Panc1 (cell line): ENCODE measurements at regions of chr7 and their contacts with region 1.

Region 1: GRCh38 chr7:151351027-151351426 is 9.4 kb downstream of the NUB1 start:
- DNase-seq: no peak
- ATAC-seq: peak; percentile 71
- H3K4me3 ChIP-seq: no peak overlapping the region
- H3K27ac ChIP-seq: no peak overlapping the region
- H3K4me1 ChIP-seq: peaks cover 9% of the 10 kb centered on the region; the same call in 1 of the 2 replicates
- H3K27me3 ChIP-seq: no peaks in the 10 kb centered on the region
- CTCF ChIP-seq: no peak; the same call in 1 of the 2 replicates

Region 2: GRCh38 chr7:151181011-151181431 is 170.0 kb before region 1 on chr7:
- CTCF ChIA-PET with region 1: no interaction called
- POLR2A ChIA-PET with region 1: no interaction called
- in situ Hi-C with region 1: no loop called
- intact Hi-C with region 1: no loop called
- DNase-seq: no peak
- ATAC-seq: no peak
- H3K4me3 ChIP-seq: no peak overlapping the region
- H3K27ac ChIP-seq: no peak overlapping the region
- H3K4me1 ChIP-seq: no peaks in the 10 kb centered on the region
- H3K27me3 ChIP-seq: peaks cover 4% of the 10 kb centered on the region; the same call in 1 of the 2 replicates
- CTCF ChIP-seq: no peak

Region 3: DNA sequence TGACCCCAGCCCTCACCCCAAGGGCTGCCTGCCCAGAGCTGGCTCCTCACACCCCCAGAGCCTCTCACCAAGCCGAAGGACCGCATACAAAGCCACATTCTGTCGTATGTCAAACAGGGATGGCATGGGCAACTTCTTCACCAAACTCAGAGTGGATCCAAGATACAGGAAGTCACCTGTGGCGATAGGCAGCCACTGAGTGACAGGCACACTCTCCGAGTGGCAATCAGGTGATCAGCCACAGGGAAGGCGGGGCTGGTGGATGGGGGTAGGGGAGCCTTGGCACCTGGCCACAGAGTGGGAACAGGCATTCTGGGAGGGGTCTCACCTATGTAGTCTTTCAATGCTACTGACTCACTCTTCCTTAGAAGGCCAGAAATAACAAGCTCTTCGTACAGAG is 156.8 kb before region 1 on chr7:
- CTCF ChIA-PET with region 1: no interaction called
- POLR2A ChIA-PET with region 1: interaction called, 10 read pairs
- in situ Hi-C with region 1: no loop called
- intact Hi-C with region 1: no loop called
- DNase-seq: no peak
- ATAC-seq: no peak
- H3K4me3 ChIP-seq: no peak overlapping the region
- H3K27ac ChIP-seq: no peak overlapping the region
- H3K4me1 ChIP-seq: no peaks in the 10 kb centered on the region
- H3K27me3 ChIP-seq: peaks cover 5% of the 10 kb centered on the region
- CTCF ChIP-seq: no peak